PC-3 (cell line): ENCODE measurements at regions of chr7 and their contacts with region 1.

Region 1: DNA sequence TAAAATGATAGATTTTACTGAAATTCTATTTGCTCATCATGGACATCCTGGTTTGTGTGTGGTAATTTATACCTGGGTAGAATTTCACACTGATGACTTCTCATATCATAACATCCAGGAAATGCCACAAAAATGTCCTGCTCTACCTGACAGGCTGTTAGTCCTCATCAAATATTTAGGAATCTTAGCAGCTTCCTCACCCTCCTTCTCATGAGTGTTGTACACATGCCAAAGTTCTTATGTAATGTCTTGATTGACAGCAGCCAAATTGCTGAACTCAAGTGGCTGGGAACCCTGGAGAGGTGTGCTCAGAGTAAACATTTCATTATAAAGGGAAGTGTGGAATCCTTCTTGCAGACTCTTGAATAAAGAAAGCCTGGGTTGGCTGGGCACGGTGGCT is 8.9 kb downstream of the EEPD1 start:
- DNase-seq: peak; percentile 98
- ATAC-seq: peak; percentile 75
- H3K4me3 ChIP-seq: no peak overlapping the region
- H3K27ac ChIP-seq: peak overlapping the region; percentile 43
- H3K4me1 ChIP-seq: peaks cover 65% of the 10 kb centered on the region
- H3K27me3 ChIP-seq: no peaks in the 10 kb centered on the region
- CTCF ChIP-seq: no peak

Region 2: DNA sequence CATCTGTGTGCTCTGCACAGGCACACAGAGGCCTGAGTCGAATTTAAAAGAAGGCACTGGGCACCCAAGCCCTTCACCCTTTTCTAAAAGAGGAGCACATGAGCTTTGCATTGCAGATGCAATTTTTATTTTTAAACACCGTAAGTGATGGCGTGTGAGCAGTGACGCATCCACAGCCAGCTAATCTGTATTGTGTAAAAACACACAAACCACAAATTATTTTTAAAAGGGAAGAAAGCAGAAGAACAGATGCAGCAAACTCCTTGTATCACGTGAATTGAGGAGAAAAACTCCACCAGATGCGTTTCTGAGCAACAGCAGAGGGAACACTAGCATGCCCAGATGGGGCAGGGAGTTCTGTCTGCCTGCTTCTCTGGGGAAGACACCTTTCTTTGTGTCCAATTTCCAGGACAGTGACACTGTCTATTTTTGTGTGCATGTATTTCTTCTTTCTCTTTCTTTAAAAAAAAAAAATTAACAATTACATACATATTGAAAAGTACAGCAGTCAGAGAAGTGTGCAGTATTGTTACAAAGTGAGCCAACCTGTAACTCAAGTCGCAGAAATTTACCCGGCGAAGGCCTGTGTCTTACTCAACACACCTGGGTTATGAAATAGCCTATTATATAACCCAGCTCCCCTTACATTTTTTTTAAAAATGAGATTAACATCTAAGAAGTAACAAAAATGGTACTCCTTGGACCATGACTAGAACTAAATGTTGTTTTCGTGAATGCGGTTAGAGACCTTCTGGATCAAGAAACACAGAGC is 30.3 kb after region 1 on chr7:
- CTCF ChIA-PET with region 1: no interaction called
- POLR2A ChIA-PET with region 1: interaction called, 3 read pairs
- intact Hi-C with region 1: loop called (anchors 2 kb)
- DNase-seq: no peak
- ATAC-seq: no peak
- H3K4me3 ChIP-seq: no peak overlapping the region
- H3K27ac ChIP-seq: no peak overlapping the region
- H3K4me1 ChIP-seq: peaks cover 22% of the 10 kb centered on the region
- H3K27me3 ChIP-seq: no peaks in the 10 kb centered on the region
- CTCF ChIP-seq: no peak